Ovary (tissue), 10 donors: ENCODE measurements at regions of chr2 and their contacts with region 1.

Region 1: GRCh38 chr2:160970052-160970965 is 189.9 kb upstream of the TANK start:
- DNase-seq: peak in 4 of 5 donors; percentile 27 to 64 (median 34)
- H3K4me3 ChIP-seq: no peak overlapping the region
- H3K27ac ChIP-seq: peak overlapping the region in 1 of 2 donors; percentile 44
- H3K4me1 ChIP-seq: peaks cover 4% of the 10 kb centered on the region
- H3K27me3 ChIP-seq: no peaks in the 10 kb centered on the region
- CTCF ChIP-seq: peak; percentile 60 to 88 (median 81)
- EP300 ChIP-seq: no peak
- POLR2A ChIP-seq: no peak

Region 2: DNA sequence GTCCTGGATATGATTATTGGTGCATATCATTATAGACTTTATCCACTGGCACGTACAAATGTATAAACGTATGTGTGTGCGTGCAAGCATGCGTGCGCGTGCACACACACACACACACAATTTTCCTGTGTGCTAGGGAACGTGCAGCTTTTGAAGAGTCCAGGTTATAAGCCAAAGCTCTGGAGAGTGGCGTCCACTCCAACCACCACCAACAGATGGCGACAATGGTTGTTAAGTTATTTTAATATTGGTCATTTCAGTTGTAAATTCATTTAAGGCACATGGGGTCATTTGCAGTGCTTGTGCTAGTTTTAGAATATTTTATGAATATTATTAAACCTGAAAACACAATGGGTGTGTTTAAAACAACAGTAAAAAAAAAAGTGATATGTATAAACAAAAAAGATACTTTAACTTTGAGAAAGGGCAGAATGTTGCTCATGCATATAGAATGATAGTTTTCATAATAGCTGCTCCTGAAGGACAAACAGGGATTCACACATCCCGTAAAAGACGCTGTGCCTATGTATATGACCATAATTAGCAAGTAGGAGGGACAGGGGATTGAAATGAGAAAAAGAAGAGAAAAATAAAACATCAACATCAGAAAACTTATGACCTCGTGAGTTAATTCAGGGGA is 646.0 kb before region 1 on chr2:
- intact Hi-C with region 1: loop called in 2 of 4 experiments (anchors 5 kb)
- DNase-seq: peak; percentile 44 to 70 (median 63)
- H3K4me3 ChIP-seq: no peak overlapping the region
- H3K27ac ChIP-seq: no peak overlapping the region
- H3K4me1 ChIP-seq: peaks cover 4% of the 10 kb centered on the region
- H3K27me3 ChIP-seq: no peaks in the 10 kb centered on the region
- CTCF ChIP-seq: peak in 2 of 3 donors; percentile 47 to 61
- EP300 ChIP-seq: no peak
- POLR2A ChIP-seq: no peak

Region 3: GRCh38 chr2:160332318-160332717 is 638.0 kb before region 1 on chr2:
- intact Hi-C with region 1: loop called in 1 of 4 experiments (anchors 5 kb)
- DNase-seq: peak in 2 of 5 donors; percentile 30 to 44
- H3K4me3 ChIP-seq: no peak overlapping the region
- H3K27ac ChIP-seq: no peak overlapping the region
- H3K4me1 ChIP-seq: peaks cover 16% of the 10 kb centered on the region
- H3K27me3 ChIP-seq: no peaks in the 10 kb centered on the region
- CTCF ChIP-seq: no peak
- EP300 ChIP-seq: no peak
- POLR2A ChIP-seq: no peak